ENCODE measurements at regions of chr6 and their contacts with region 1.

Region 1: DNA sequence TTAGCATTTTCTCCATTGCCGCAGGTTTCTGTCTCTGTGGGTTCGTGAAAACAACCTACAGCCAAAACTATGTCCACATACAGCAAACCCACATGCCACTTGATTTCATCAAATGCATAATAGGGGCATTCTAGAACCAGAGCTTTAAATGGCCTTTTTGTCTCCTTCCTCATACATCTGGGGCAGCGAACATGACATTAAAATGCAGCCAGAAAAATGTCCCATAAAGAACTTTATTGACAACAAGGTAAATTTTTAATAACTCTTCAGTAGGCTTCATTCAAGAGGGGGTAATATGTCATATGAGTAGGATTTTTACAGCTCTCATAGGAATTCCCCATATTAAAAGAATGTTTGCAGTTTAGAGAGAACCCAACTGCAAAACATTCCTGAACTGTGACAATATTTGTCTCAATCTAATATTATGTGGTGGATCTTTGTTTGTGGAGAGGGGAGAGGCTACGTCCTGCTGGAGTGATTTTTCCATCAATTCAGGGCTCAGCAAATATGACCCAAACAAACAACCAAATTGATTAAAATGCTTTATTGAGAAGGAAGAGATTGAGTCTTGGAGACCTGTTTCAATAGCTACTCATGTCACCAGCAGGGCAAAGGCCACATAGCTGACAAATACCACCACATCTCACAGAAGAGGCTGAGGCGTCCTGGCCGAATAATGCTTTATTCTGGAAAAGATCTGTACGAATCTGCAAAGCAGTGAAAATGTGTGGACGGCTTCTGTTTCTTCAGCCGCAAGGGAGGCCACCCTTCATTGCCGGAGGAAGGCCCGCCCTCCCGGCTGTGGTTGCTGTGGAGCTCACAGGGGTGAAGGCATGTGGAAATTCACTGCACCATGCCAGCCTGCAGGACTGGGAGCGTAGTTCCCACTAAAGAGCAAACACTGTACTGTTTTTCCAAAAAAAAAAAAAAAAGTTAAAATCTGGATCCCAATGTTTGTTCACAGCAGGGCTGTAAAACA is 89.8 kb upstream of the QKI start:
- DNase-seq: peak; percentile 8
- ATAC-seq: peak; percentile 82
- H3K4me3 ChIP-seq: no peak overlapping the region
- H3K27ac ChIP-seq: no peak overlapping the region
- H3K4me1 ChIP-seq: no peaks in the 10 kb centered on the region
- H3K27me3 ChIP-seq: no peaks in the 10 kb centered on the region
- CTCF ChIP-seq: no peak
- POLR2A ChIP-seq: no peak
- RAD21 ChIP-seq: no peak

Region 2: DNA sequence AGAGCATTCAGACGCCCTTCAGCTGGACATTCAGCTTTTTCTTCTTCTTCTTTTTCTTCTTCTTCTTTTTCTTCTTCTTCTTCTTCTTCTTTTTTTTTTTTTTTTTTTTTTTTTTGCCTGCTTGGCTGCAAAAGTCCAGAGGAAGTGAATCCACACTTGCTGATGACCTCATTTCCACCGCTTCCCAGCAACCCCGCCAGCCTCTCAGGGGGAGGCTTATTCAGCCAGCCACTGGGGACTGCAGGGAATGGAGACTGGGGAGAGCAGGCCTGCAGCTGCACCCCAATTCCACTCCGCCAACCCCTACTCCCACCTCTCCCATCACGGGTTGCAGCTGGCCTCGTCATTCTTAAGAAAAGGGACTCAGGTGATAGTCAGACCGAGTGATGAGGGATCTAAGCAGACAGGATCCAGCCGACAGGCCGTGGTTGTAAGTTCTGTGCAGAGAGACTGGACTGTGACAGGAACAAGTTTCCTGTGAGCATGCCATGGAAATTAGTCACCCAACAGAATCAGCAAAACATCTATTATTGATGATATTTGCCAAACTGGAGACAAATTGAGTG is 30.8 kb after region 1 on chr6:
- CTCF ChIA-PET with region 1: interaction called, 5 read pairs
- POLR2A ChIA-PET with region 1: interaction called, 15 read pairs
- dilution Hi-C with region 1: no loop called
- in situ Hi-C with region 1: no loop called
- intact Hi-C with region 1: no loop called
- DNase-seq: peak; percentile 67
- ATAC-seq: peak; percentile 66
- H3K4me3 ChIP-seq: no peak overlapping the region
- H3K27ac ChIP-seq: peak overlapping the region; percentile 30
- H3K4me1 ChIP-seq: peaks cover 8% of the 10 kb centered on the region; the same call in 1 of the 2 replicates
- H3K27me3 ChIP-seq: no peaks in the 10 kb centered on the region
- CTCF ChIP-seq: no peak
- POLR2A ChIP-seq: no peak
- RAD21 ChIP-seq: no peak